B cell (primary cell): ENCODE measurements at regions of chr16 and their contacts with region 1.

Region 1: GRCh38 chr16:85086347-85087291 is 25.7 kb downstream of the CIBAR2 start:
- DNase-seq: peak; percentile 75
- ATAC-seq: peak; percentile 82
- H3K4me3 ChIP-seq: no peak overlapping the region
- H3K4me3 Mint-ChIP-seq: no peak overlapping the region
- H3K27ac ChIP-seq: no peak overlapping the region
- H3K27ac Mint-ChIP-seq: no peak overlapping the region
- H3K4me1 ChIP-seq: peaks cover 24 to 28% of the 10 kb centered on the region in 2 donors
- H3K4me1 Mint-ChIP-seq: peaks cover 26% of the 10 kb centered on the region
- H3K27me3 ChIP-seq: peaks cover 0 to 13% (median 4%) of the 10 kb centered on the region in 4 experiments
- H3K27me3 Mint-ChIP-seq: peaks cover 13% of the 10 kb centered on the region
- CTCF ChIP-seq: peak; percentile 78

Region 2: GRCh38 chr16:84970447-84971127 is 116.0 kb before region 1 on chr16:
- CTCF ChIA-PET with region 1: interaction called, 24 read pairs
- POLR2A ChIA-PET with region 1: no interaction called
- intact Hi-C with region 1: no loop called
- DNase-seq: peak; percentile 83
- ATAC-seq: peak; percentile 80
- H3K4me3 ChIP-seq: no peak overlapping the region
- H3K4me3 Mint-ChIP-seq: no peak overlapping the region
- H3K27ac ChIP-seq: no peak overlapping the region
- H3K27ac Mint-ChIP-seq: no peak overlapping the region
- H3K4me1 ChIP-seq: peaks cover 3 to 5% of the 10 kb centered on the region in 2 donors
- H3K4me1 Mint-ChIP-seq: peaks cover 4% of the 10 kb centered on the region
- H3K27me3 ChIP-seq: peaks cover 0 to 7% (median 0%) of the 10 kb centered on the region in 4 experiments
- H3K27me3 Mint-ChIP-seq: peaks cover 3% of the 10 kb centered on the region
- CTCF ChIP-seq: peak; percentile 92

Region 3: DNA sequence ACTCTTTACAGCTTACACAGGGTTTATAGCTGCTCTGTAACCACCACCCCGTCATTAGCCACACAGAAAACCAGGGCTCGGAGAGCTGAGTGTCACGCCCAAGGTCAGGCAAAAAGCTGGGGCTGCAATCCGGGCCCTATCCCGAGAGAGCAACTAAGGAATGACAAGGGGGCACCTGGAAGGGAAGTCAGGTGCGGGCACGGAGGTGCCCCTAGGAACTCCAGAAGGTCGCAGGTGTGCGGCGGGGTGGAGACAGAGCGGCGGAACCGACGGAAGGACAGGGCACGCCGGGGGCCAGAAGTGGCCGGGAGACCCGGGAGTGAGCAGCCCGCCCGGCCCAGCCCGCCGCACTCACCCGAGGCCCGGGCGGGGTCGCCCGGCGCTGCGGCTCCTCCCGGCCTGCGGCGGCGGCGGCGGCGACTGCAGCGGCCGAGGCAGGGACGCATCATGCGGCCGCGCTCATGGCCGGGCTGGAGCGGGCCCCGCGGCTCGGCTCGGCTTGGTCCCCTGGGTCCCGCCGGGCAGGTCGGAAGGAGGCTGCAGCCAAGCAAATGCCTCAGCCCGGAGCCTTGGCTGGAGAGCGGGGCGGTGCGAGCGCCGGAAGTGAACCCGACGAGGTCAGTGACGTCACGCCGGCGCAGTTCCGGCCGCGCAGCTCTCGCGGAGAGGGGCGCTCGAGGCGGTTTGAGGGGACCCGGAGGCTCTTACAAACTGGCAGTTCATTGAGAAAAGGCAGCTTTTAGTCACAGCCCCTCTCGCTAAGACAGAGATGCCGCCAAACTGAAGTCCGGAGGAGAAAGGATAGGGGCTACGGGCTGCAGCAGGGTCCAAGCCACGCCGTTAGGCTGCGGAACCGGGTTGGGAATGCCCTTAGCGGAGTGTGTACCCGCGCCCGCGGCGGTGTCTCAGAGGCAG is 75.4 kb before region 1 on chr16 and contains the start of gene ZDHHC7:
- CTCF ChIA-PET with region 1: interaction called, 31 read pairs
- POLR2A ChIA-PET with region 1: no interaction called
- intact Hi-C with region 1: loop called (anchors 1 kb)
- DNase-seq: peak; percentile 93
- ATAC-seq: peak; percentile 92
- H3K4me3 ChIP-seq: peak within 1 kb of the TSS; percentile 83 to 96 (median 95)
- H3K4me3 Mint-ChIP-seq: peak within 1 kb of the TSS; percentile 91
- H3K27ac ChIP-seq: peak within 1 kb of the TSS; percentile 94 to 97
- H3K27ac Mint-ChIP-seq: peak within 1 kb of the TSS; percentile 96
- H3K4me1 ChIP-seq: peaks cover 12 to 19% of the 10 kb centered on the region in 2 donors
- H3K4me1 Mint-ChIP-seq: peaks cover 37% of the 10 kb centered on the region
- H3K27me3 ChIP-seq: no peaks in the 10 kb centered on the region
- H3K27me3 Mint-ChIP-seq: peaks cover 10% of the 10 kb centered on the region
- CTCF ChIP-seq: no peak
- total RNA-seq, gene ZDHHC7: 35.6 and 36.1 TPM in 2 replicates

Region 4: GRCh38 chr16:85055503-85056210 is 31.0 kb before region 1 on chr16:
- CTCF ChIA-PET with region 1: interaction called, 11 read pairs
- POLR2A ChIA-PET with region 1: no interaction called
- intact Hi-C with region 1: loop called (anchors 1 kb)
- DNase-seq: peak; percentile 83
- ATAC-seq: peak; percentile 95
- H3K4me3 ChIP-seq: peak overlapping the region; percentile 20 to 42 (median 34)
- H3K4me3 Mint-ChIP-seq: peak overlapping the region; percentile 83
- H3K27ac ChIP-seq: peak overlapping the region; percentile 35 to 59
- H3K27ac Mint-ChIP-seq: peak overlapping the region; percentile 83
- H3K4me1 ChIP-seq: peaks cover 38 to 41% of the 10 kb centered on the region in 2 donors
- H3K4me1 Mint-ChIP-seq: peaks cover 38% of the 10 kb centered on the region
- H3K27me3 ChIP-seq: peaks cover 0 to 3% (median 1%) of the 10 kb centered on the region in 4 experiments
- H3K27me3 Mint-ChIP-seq: peaks cover 13% of the 10 kb centered on the region
- CTCF ChIP-seq: no peak

Region 5: DNA sequence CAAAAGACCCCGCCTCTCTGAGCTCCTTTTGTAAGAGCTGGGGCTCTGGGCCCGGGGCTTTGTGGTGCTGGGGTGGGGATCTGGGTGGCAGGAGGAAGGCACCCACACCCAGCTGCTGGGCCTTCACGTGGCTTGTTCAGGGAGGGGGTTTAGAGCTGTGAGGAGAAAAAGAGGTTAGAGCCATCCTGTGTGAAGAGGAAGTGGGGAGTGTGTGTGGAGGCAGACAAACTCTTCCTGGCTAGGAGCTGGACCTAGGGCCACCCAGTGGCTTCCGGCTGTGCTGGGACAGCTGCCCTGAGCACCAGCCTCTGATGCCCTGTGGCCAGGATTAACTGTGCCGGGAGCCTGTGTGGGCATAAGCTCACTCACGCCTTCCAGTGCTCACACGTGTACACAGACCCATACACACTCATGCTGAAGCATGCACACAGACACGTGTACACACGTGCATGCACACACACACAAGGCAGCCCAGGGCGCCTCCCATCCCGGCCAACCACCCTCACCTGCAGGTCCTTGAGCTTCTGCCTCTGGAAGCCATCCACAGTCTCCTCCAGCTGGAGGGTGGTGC is 18.3 kb after region 1 on chr16:
- CTCF ChIA-PET with region 1: no interaction called
- POLR2A ChIA-PET with region 1: no interaction called
- intact Hi-C with region 1: no loop called
- DNase-seq: peak; percentile 65
- ATAC-seq: peak; percentile 67
- H3K4me3 ChIP-seq: peak overlapping the region in 1 of 5 experiments; percentile 19
- H3K4me3 Mint-ChIP-seq: peak overlapping the region; percentile 47
- H3K27ac ChIP-seq: peak overlapping the region in 1 of 2 donors; percentile 29
- H3K27ac Mint-ChIP-seq: peak overlapping the region; percentile 71
- H3K4me1 ChIP-seq: peaks cover 20 to 36% of the 10 kb centered on the region in 2 donors
- H3K4me1 Mint-ChIP-seq: peaks cover 21% of the 10 kb centered on the region
- H3K27me3 ChIP-seq: no peaks in the 10 kb centered on the region
- H3K27me3 Mint-ChIP-seq: no peaks in the 10 kb centered on the region
- CTCF ChIP-seq: no peak